ENCODE measurements at regions of chrX and their contacts with region 1.

Region 1: GRCh38 chrX:13000301-13000811 is 25.4 kb downstream of the TMSB4X start:
- DNase-seq: peak in 7 of 14 experiments; percentile 35 to 76 (median 60)
- ATAC-seq: peak; percentile 47
- H3K4me3 ChIP-seq: peak overlapping the region; percentile 37
- H3K4me3 Mint-ChIP-seq: peak overlapping the region; percentile 89
- H3K27ac ChIP-seq: peak overlapping the region; percentile 72 to 85
- H3K27ac Mint-ChIP-seq: peak overlapping the region; percentile 90
- H3K4me1 ChIP-seq: peaks cover 56% of the 10 kb centered on the region
- H3K4me1 Mint-ChIP-seq: peaks cover 83% of the 10 kb centered on the region
- H3K27me3 ChIP-seq: no peaks in the 10 kb centered on the region
- H3K27me3 Mint-ChIP-seq: no peaks in the 10 kb centered on the region
- CTCF ChIP-seq: no peak

Region 2: GRCh38 chrX:12843668-12844279 is 156.6 kb before region 1 on chrX:
- CTCF ChIA-PET with region 1: no interaction called
- POLR2A ChIA-PET with region 1: no interaction called
- intact Hi-C with region 1: no loop called
- DNase-seq: peak in 1 of 14 experiments; percentile 7
- ATAC-seq: no peak
- H3K4me3 ChIP-seq: peak overlapping the region; percentile 39
- H3K4me3 Mint-ChIP-seq: peak overlapping the region; percentile 81
- H3K27ac ChIP-seq: peak overlapping the region in 1 of 2 donors; percentile 24
- H3K27ac Mint-ChIP-seq: peak overlapping the region; percentile 80
- H3K4me1 ChIP-seq: no peaks in the 10 kb centered on the region
- H3K4me1 Mint-ChIP-seq: peaks cover 15% of the 10 kb centered on the region
- H3K27me3 ChIP-seq: no peaks in the 10 kb centered on the region
- H3K27me3 Mint-ChIP-seq: no peaks in the 10 kb centered on the region
- CTCF ChIP-seq: no peak

Region 3: DNA sequence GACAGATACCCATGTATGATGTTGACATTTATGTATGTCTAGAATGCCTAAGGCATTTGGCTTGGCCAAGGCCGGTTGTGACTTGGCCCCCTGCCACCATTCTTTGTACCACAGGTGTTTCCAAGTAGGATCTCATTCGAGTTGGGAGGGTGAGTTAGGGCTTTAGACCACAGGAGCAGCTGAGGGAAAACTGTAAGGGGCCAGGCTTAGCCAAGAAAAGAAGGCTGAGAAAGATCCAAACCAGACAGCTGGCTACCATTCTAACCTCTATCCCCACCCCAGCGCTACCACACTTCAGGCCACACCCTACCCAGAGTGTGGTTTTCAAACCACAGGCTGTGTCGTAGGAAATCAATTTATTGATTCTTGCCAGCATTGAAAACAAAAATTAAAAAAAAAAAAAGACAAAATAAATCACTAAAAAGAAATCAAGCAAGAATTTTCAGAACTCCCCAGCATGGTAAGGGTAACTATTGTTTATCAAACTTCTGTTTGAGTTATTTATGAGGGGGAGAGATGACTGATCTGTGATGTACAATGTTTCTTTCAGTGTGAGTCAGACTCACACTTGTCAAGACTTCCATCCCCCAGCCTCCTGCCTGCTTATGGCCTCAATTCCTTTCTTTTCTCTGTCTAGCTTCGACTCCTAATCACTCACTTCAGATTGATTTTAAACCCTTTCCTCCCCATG is 15.6 kb before region 1 on chrX:
- CTCF ChIA-PET with region 1: no interaction called
- POLR2A ChIA-PET with region 1: interaction called, 502 read pairs
- intact Hi-C with region 1: loop called (anchors 2 kb)
- DNase-seq: peak in 10 of 14 experiments; percentile 35 to 80 (median 52)
- ATAC-seq: peak; percentile 77
- H3K4me3 ChIP-seq: peak overlapping the region; percentile 12
- H3K4me3 Mint-ChIP-seq: peak overlapping the region; percentile 82
- H3K27ac ChIP-seq: peak overlapping the region; percentile 66 to 69
- H3K27ac Mint-ChIP-seq: peak overlapping the region; percentile 95
- H3K4me1 ChIP-seq: peaks cover 80% of the 10 kb centered on the region
- H3K4me1 Mint-ChIP-seq: peaks cover 76% of the 10 kb centered on the region
- H3K27me3 ChIP-seq: no peaks in the 10 kb centered on the region
- H3K27me3 Mint-ChIP-seq: no peaks in the 10 kb centered on the region
- CTCF ChIP-seq: no peak

Region 4: DNA sequence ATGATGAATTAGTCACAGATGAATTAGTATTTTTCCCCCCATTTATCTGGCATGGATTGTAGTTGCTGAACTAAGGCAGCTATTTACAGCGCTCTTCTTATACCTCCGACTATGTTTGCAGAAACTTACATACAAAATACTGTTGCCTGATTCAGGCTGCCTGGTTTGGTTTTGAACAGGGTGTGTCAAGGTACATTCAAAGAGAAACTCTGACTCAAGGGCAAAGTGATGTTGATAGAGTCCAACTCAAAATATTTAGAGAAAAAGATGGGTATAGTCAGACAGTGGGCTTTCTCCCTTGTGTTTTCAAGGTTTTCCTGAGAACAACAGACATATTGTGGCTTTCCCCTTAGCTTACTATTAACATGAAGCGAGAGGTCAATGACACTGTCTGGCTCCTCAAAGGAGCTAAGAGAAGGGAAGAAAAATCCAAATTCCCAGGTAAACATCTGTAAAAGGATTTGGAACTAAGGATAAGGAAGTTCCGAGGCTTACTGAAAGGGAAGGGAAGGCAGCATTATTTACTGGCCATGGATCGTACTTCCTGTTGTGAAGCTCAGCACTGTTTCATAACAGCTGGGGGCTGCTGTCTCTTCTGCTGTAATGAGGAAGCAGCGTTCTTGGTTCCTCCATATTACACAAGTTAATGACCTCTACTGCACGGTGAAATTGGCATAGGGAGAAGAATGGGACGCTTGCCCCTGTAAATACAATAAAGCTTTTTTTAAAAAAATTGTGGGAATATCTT is 13.2 kb after region 1 on chrX:
- CTCF ChIA-PET with region 1: interaction called, 5 read pairs
- POLR2A ChIA-PET with region 1: interaction called, 55 read pairs
- intact Hi-C with region 1: no loop called
- DNase-seq: peak in 7 of 14 experiments; percentile 8 to 66 (median 43)
- ATAC-seq: peak; percentile 84
- H3K4me3 ChIP-seq: peak overlapping the region; percentile 9
- H3K4me3 Mint-ChIP-seq: peak overlapping the region; percentile 68
- H3K27ac ChIP-seq: peak overlapping the region; percentile 63 to 66
- H3K27ac Mint-ChIP-seq: peak overlapping the region; percentile 88
- H3K4me1 ChIP-seq: peaks cover 45% of the 10 kb centered on the region
- H3K4me1 Mint-ChIP-seq: peaks cover 76% of the 10 kb centered on the region
- H3K27me3 ChIP-seq: no peaks in the 10 kb centered on the region
- H3K27me3 Mint-ChIP-seq: no peaks in the 10 kb centered on the region
- CTCF ChIP-seq: no peak

Region 5: GRCh38 chrX:13078739-13079444 is 78.5 kb after region 1 on chrX:
- CTCF ChIA-PET with region 1: no interaction called
- POLR2A ChIA-PET with region 1: interaction called, 102 read pairs
- intact Hi-C with region 1: no loop called
- DNase-seq: peak in 4 of 14 experiments; percentile 34 to 56 (median 48)
- ATAC-seq: no peak
- H3K4me3 ChIP-seq: peak overlapping the region; percentile 28
- H3K4me3 Mint-ChIP-seq: peak overlapping the region; percentile 62
- H3K27ac ChIP-seq: peak overlapping the region; percentile 62
- H3K27ac Mint-ChIP-seq: peak overlapping the region; percentile 95
- H3K4me1 ChIP-seq: peaks cover 76% of the 10 kb centered on the region
- H3K4me1 Mint-ChIP-seq: peaks cover 96% of the 10 kb centered on the region
- H3K27me3 ChIP-seq: no peaks in the 10 kb centered on the region
- H3K27me3 Mint-ChIP-seq: no peaks in the 10 kb centered on the region
- CTCF ChIP-seq: no peak

Measured in CD4-positive, alpha-beta T cell (primary cell).